Activated B cell treated with CpG ODN at 0.5 μM for 24 hours (primary cell): ENCODE measurements at regions of chr5 and their contacts with region 1.

Region 1: GRCh38 chr5:177454397-177455035 is 7.9 kb downstream of the PRR7 start:
- DNase-seq: peak; percentile 97
- ATAC-seq: peak; percentile 48
- H3K4me3 Mint-ChIP-seq: peak overlapping the region; percentile 91
- H3K27ac Mint-ChIP-seq: peak overlapping the region; percentile 12
- H3K4me1 Mint-ChIP-seq: peaks cover 28% of the 10 kb centered on the region
- H3K27me3 Mint-ChIP-seq: no peaks in the 10 kb centered on the region
- CTCF ChIP-seq: no peak

Region 2: DNA sequence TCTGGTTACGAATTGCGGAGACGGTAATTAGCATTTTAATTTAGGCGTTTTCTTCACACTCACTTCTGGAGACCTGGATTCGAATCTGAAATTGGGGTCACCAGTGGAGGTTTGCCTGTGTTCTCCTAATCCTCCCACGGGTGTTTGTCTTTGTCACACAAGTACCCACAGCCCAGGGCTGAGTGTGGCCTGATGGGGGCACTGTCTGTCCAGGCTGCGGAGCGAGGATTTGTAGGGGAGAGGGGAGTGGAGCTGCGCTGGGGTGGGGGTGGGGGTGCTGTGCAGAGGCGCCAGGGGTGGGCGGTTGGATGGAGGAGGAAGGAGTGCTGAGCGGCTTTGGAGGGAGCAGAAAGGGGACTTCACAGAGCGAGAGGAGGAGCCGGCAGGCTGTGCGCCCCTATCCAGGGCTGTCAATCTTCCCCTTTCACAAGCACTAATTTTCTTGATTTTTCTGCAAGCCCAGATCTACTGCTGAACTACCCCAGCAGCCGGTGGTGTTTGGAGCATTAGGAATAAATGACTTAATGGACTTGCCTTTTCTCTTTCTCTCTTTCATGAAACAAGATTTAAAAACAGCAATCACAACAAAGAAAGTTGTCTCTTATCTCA is 754.2 kb before region 1 on chr5:
- CTCF ChIA-PET with region 1: no interaction called
- POLR2A ChIA-PET with region 1: no interaction called
- intact Hi-C with region 1: no loop called
- DNase-seq: no peak
- ATAC-seq: no peak
- H3K4me3 Mint-ChIP-seq: no peak overlapping the region
- H3K27ac Mint-ChIP-seq: no peak overlapping the region
- H3K4me1 Mint-ChIP-seq: no peaks in the 10 kb centered on the region
- H3K27me3 Mint-ChIP-seq: peaks cover 61% of the 10 kb centered on the region
- CTCF ChIP-seq: no peak

Region 3: GRCh38 chr5:177133091-177133852 is 321.2 kb before region 1 on chr5 and contains the start of gene NSD1:
- CTCF ChIA-PET with region 1: no interaction called
- POLR2A ChIA-PET with region 1: no interaction called
- intact Hi-C with region 1: loop called (anchors 5 kb)
- DNase-seq: peak; percentile 92
- ATAC-seq: peak; percentile 74
- H3K4me3 Mint-ChIP-seq: peak within 1 kb of the TSS; percentile 85
- H3K27ac Mint-ChIP-seq: peak within 1 kb of the TSS; percentile 87
- H3K4me1 Mint-ChIP-seq: peaks cover 52% of the 10 kb centered on the region
- H3K27me3 Mint-ChIP-seq: no peaks in the 10 kb centered on the region
- CTCF ChIP-seq: no peak
- total RNA-seq, gene NSD1: 103 and 108 TPM in 2 replicates

Region 4: DNA sequence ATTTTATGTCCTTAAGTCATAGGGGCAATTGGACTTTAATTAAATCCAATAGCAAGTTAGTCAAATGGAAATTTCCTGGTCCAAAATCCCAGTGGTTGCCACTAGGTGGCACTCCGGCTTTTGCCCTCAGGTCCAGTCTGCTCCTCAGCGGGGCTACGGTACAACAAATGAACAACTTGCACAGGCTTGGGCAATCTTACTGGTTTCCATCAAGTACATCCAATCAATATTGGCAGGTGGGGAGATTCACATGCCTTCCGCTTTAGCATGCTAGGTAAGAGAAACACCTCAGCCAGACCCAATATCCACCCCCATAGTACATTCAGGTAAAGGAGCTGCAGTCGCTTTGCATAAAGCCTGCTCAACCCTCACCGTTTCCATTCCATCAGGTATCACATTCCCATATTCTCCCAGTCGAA is 136.5 kb before region 1 on chr5:
- CTCF ChIA-PET with region 1: interaction called, 6 read pairs
- POLR2A ChIA-PET with region 1: no interaction called
- intact Hi-C with region 1: loop called (anchors 1 kb)
- DNase-seq: peak; percentile 48
- ATAC-seq: peak; percentile 87
- H3K4me3 Mint-ChIP-seq: no peak overlapping the region
- H3K27ac Mint-ChIP-seq: no peak overlapping the region
- H3K4me1 Mint-ChIP-seq: peaks cover 15% of the 10 kb centered on the region
- H3K27me3 Mint-ChIP-seq: no peaks in the 10 kb centered on the region
- CTCF ChIP-seq: no peak

Region 5: DNA sequence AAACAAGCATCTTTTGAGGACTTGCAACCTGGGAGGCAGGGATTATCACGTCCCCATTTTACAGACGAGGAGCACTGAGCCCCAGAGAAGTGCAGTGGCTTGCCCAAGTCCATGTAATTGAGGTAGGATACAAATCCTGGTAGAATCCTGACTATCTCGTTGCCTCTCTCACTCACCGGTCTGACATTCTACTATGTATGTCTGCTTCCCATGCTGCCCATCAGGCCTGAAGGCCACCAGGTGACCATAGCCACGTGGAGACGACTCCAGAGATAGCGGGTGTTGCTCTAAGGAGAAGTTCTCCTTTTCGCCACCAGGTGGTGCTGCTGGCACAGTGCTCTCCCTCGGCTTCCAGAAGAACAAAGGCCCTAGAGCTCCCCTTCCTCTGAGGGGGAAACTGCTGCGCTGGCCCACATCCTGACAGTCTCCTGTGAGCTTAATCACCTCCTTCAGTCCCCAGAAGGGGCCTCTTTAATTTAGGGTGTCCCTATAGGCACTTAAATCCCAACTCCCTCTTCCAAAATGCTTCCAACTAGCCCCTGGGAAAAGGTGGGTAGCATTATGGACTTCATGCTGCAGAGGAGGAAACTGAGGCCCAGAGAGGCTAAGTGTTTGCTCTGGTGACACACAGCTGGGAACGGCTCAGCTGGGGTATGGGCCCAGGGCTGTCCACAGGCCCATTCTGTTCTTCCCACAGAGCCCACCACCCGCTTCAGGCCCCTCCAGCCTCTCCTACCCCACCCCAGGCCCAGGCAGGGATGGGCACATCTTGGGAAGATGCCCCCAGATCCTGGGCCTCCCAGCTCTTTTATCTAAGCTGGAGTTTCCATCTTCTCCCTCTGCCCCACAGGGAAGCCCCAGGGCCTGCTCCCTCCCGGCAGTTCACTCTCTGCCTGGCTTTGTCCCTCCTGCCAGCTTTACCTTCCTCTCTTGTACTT is 63.9 kb before region 1 on chr5:
- CTCF ChIA-PET with region 1: interaction called, 89 read pairs
- POLR2A ChIA-PET with region 1: interaction called, 21 read pairs
- intact Hi-C with region 1: loop called (anchors 1 kb)
- DNase-seq: peak; percentile 71
- ATAC-seq: peak; percentile 93
- H3K4me3 Mint-ChIP-seq: no peak overlapping the region
- H3K27ac Mint-ChIP-seq: no peak overlapping the region
- H3K4me1 Mint-ChIP-seq: peaks cover 29% of the 10 kb centered on the region
- H3K27me3 Mint-ChIP-seq: peaks cover 1% of the 10 kb centered on the region
- CTCF ChIP-seq: peak; percentile 29

Region 6: GRCh38 chr5:177425801-177426565 is 28.5 kb before region 1 on chr5:
- CTCF ChIA-PET with region 1: interaction called, 20 read pairs
- POLR2A ChIA-PET with region 1: interaction called, 296 read pairs
- intact Hi-C with region 1: loop called (anchors 1 kb)
- DNase-seq: peak; percentile 91
- ATAC-seq: peak; percentile 85
- H3K4me3 Mint-ChIP-seq: peak overlapping the region; percentile 91
- H3K27ac Mint-ChIP-seq: peak overlapping the region; percentile 93
- H3K4me1 Mint-ChIP-seq: peaks cover 53% of the 10 kb centered on the region
- H3K27me3 Mint-ChIP-seq: no peaks in the 10 kb centered on the region
- CTCF ChIP-seq: no peak

Region 7: GRCh38 chr5:177472460-177473441 is 18.2 kb after region 1 on chr5:
- CTCF ChIA-PET with region 1: interaction called, 5 read pairs
- POLR2A ChIA-PET with region 1: no interaction called
- intact Hi-C with region 1: loop called (anchors 1 kb)
- DNase-seq: peak; percentile 36
- ATAC-seq: peak; percentile 60
- H3K4me3 Mint-ChIP-seq: peak overlapping the region; percentile 76
- H3K27ac Mint-ChIP-seq: no peak overlapping the region
- H3K4me1 Mint-ChIP-seq: peaks cover 16% of the 10 kb centered on the region
- H3K27me3 Mint-ChIP-seq: peaks cover 4% of the 10 kb centered on the region
- CTCF ChIP-seq: no peak

Region 8: GRCh38 chr5:177509381-177509951 is 55.0 kb after region 1 on chr5 and contains the start of gene DOK3:
- CTCF ChIA-PET with region 1: interaction called, 6 read pairs
- POLR2A ChIA-PET with region 1: interaction called, 20 read pairs
- intact Hi-C with region 1: no loop called
- DNase-seq: peak; percentile 52
- ATAC-seq: peak; percentile 33
- H3K4me3 Mint-ChIP-seq: peak within 1 kb of the TSS; percentile 93
- H3K27ac Mint-ChIP-seq: peak within 1 kb of the TSS; percentile 96
- H3K4me1 Mint-ChIP-seq: peaks cover 60% of the 10 kb centered on the region
- H3K27me3 Mint-ChIP-seq: no peaks in the 10 kb centered on the region
- CTCF ChIP-seq: no peak
- total RNA-seq, gene DOK3: 82.5 and 88.5 TPM in 2 replicates